ENCODE measurements at regions of chr11 and their contacts with region 1.

Region 1: DNA sequence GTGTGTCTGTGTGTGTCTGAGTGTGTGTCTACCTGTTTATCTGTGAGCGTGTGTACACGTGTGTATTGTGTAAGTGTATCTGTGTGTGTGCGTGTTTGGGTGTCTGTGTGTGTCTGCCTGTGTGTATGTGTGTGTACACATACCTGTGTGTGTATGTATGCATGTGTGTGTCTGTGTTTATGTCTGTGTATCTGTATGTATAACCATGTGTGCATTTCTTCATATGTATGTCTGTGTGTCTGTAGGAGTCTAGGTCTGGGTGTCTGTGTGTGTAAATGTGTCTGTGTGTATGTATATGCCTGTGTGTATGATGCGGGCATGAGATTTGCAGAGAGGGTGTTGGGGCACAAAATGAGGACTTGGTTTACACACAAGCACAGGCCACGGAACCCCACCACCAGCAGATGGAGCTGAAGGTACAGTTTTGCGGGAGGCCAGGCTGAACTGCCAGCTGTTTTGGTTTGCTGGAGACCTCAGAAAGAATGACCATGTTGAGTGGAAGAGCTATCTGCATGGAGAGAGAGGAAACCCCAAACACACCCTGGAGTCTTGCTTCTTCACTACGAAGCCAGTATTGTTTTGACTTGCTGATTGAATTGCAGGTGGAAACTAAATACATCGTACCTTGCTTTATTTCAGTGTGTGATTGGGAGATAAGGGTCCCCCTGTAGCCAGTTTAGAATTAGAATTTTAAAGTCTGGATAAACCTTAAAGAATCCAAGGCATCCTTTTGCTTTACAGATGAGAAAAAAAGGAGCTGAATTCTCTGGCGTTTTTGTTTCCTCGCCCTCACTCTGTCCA is 497.2 kb downstream of the NTM start:
- DNase-seq: peak; percentile 80
- H3K4me3 ChIP-seq: no peak overlapping the region
- H3K27ac ChIP-seq: no peak overlapping the region
- H3K4me1 ChIP-seq: peaks cover 36% of the 10 kb centered on the region
- H3K27me3 ChIP-seq: no peaks in the 10 kb centered on the region
- CTCF ChIP-seq: peak; percentile 85 to 88
- POLR2A ChIP-seq: no peak

Region 2: DNA sequence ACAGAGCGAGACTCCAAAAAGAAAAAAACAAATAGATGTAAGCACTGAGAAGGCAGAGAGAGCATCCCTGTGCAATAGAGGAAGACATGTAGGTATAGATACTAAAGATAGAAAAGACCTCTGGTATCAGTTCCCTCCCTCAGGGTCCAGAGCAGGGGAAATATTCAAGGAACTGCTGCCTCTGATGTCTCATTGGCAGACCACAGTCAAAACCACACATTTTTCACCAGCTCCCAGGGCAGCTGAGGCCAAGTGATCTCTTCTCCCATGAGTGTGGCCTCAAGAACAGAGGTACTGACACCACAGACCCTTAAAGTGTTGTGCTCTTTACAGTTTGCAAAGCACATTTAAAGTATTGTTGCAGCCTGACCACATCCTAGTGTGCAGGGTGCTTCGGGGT is 208.7 kb before region 1 on chr11:
- CTCF ChIA-PET with region 1: no interaction called
- POLR2A ChIA-PET with region 1: no interaction called
- dilution Hi-C with region 1: no loop called
- intact Hi-C with region 1: no loop called
- DNase-seq: no peak
- H3K4me3 ChIP-seq: no peak overlapping the region
- H3K27ac ChIP-seq: no peak overlapping the region
- H3K4me1 ChIP-seq: no peaks in the 10 kb centered on the region
- H3K27me3 ChIP-seq: peaks cover 2 to 3% of the 10 kb centered on the region in 2 experiments
- CTCF ChIP-seq: no peak
- POLR2A ChIP-seq: no peak

Region 3: DNA sequence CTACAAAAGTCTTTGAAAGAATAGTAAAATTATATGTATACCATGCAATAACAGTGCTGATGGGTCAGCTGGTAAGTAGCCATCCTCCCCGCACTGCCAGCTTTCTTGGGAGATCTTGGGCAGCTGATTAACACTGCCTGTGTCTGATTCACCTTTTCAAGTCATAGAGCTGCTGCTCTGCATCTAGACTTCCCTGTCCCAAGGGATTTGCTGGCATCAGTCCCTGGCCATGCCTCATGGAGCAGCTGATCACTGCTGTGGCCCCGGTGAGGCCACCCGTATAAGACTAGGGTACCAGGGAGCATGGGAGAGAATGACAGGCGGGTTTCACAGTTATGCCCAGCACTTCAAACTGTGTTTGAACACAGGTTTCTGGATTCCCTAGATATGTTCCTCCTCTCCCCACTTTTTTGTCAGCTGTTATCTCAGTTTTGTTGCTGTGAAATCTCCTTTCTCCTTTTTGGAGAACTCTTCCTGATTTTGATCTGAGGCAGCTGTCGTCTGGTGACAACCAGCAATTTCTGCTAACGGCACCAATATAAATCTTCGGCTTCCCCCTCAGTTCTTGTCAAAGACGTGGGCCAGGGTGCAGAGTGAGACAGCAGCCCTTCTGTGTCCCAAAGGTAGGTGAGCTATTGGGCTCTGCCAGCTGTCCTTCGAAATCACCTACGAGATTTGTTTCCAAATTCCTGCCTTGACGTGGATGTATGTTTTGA is 58.3 kb before region 1 on chr11:
- CTCF ChIA-PET with region 1: interaction called, 9 read pairs
- POLR2A ChIA-PET with region 1: no interaction called
- dilution Hi-C with region 1: no loop called
- intact Hi-C with region 1: loop called (anchors 2 kb)
- DNase-seq: no peak
- H3K4me3 ChIP-seq: no peak overlapping the region
- H3K27ac ChIP-seq: no peak overlapping the region
- H3K4me1 ChIP-seq: peaks cover 11% of the 10 kb centered on the region
- H3K27me3 ChIP-seq: peaks cover 0 to 6% of the 10 kb centered on the region in 2 experiments
- CTCF ChIP-seq: no peak
- POLR2A ChIP-seq: no peak

Region 4: DNA sequence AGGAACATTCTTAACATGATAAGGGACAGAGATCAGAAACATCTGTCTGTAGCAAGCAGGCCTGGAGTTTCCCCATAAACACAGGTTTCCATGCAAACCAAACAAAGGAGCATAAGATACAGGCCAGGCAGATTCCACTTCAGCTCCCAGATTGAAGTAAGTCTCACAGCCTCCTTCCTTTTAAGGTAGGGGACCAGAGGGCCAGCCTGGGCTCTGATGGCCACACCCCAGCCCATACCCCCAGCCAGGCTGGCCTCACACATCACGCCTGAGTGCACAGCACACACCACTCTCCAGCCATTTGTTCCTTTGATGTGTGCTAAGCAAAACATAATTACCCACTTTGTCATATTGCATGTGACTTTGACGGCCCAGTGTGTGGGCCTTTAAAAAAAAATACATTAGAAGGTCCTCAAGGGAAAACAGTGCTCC is 21.5 kb after region 1 on chr11:
- CTCF ChIA-PET with region 1: interaction called, 61 read pairs
- POLR2A ChIA-PET with region 1: no interaction called
- dilution Hi-C with region 1: no loop called
- intact Hi-C with region 1: loop called (anchors 1 kb)
- DNase-seq: no peak
- H3K4me3 ChIP-seq: no peak overlapping the region
- H3K27ac ChIP-seq: peak overlapping the region; percentile 45
- H3K4me1 ChIP-seq: peaks cover 13% of the 10 kb centered on the region
- H3K27me3 ChIP-seq: peaks cover 0 to 2% of the 10 kb centered on the region in 2 experiments
- CTCF ChIP-seq: no peak
- POLR2A ChIP-seq: no peak

Region 5: GRCh38 chr11:132028380-132029240 is 161.0 kb after region 1 on chr11:
- CTCF ChIA-PET with region 1: interaction called, 8 read pairs
- POLR2A ChIA-PET with region 1: no interaction called
- dilution Hi-C with region 1: no loop called
- intact Hi-C with region 1: loop called (anchors 1 kb)
- DNase-seq: peak; percentile 74
- H3K4me3 ChIP-seq: no peak overlapping the region
- H3K27ac ChIP-seq: no peak overlapping the region
- H3K4me1 ChIP-seq: peaks cover 13% of the 10 kb centered on the region
- H3K27me3 ChIP-seq: no peaks in the 10 kb centered on the region
- CTCF ChIP-seq: peak; percentile 61 to 65
- POLR2A ChIP-seq: no peak

Region 6: DNA sequence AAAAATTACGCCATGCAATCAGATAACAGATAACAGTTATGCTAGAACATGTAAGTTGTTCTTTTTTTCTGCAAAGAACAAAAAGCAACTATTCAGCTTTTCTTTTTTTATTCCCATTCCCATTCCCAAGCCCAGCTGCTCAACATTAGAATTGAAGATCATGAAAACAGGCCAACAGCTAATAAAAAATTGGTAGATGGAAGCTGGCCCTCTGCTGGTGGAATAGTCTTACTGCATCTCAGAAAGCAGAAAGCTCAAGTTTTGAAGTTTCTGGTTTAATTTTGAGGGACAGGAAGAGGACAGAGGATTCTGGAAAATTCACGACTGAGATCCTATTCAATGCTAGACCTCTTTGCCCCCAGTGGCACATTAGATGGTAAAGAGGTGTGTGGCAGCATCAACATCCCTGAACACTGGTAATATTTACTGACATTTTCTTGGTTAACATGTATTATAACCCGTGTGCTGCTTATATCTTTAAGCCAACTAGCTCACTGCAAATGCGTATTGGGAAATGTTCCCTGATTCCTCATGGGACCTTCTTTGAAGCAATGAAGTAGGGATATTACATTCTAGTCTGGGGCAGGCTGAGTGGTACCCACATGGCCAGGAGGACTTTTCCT is 1073.5 kb after region 1 on chr11:
- CTCF ChIA-PET with region 1: interaction called, 39 read pairs
- POLR2A ChIA-PET with region 1: no interaction called
- dilution Hi-C with region 1: no loop called
- intact Hi-C with region 1: no loop called
- DNase-seq: peak; percentile 19
- H3K4me3 ChIP-seq: no peak overlapping the region
- H3K27ac ChIP-seq: no peak overlapping the region
- H3K4me1 ChIP-seq: no peaks in the 10 kb centered on the region
- H3K27me3 ChIP-seq: peaks cover 10 to 17% of the 10 kb centered on the region in 2 experiments
- CTCF ChIP-seq: peak; percentile 67 to 71
- POLR2A ChIP-seq: no peak

Measured in endothelial cell of umbilical vein (primary cell).